Naive thymus-derived CD4-positive, alpha-beta T cell (primary cell): ENCODE measurements at regions of chr21 and their contacts with region 1.

Region 1: DNA sequence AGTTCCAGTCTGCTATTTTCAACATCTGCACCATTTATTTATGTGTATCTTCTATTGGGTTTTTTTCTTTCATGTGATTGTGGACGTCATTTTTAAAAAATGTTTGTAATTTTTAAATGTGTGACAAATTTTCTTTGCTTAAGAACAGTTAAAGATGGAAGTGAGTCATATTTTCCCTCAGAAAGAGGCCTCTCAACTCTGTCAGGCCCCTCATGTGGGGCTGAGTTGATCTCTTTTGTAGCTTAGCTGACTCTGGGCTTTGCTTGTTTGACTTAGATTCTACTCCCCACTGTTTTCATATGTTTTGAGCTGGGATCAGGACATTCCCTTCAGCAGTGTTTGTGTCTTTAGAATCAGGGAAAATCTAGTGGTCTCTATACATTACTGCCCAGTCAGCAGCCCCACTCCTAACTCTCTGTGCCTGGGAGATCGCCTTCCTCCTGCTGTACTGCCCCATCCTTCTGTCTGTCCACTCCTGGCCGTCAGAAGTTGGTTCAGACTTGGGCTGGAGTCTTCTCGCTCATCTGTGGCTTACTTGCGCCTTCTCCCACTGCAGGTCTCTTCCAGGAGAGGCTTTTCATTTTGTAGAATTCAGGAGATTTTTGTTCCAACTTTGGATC is 137.4 kb downstream of the DYRK1A start:
- DNase-seq: no peak
- ATAC-seq: no peak
- H3K4me3 ChIP-seq: no peak overlapping the region
- H3K4me3 Mint-ChIP-seq: no peak overlapping the region
- H3K27ac ChIP-seq: no peak overlapping the region
- H3K27ac Mint-ChIP-seq: peak overlapping the region; percentile 28 to 88 (median 70)
- H3K4me1 ChIP-seq: no peaks in the 10 kb centered on the region
- H3K4me1 Mint-ChIP-seq: peaks cover 6 to 42% (median 31%) of the 10 kb centered on the region in 7 donors
- H3K27me3 ChIP-seq: no peaks in the 10 kb centered on the region
- H3K27me3 Mint-ChIP-seq: no peaks in the 10 kb centered on the region

Region 2: DNA sequence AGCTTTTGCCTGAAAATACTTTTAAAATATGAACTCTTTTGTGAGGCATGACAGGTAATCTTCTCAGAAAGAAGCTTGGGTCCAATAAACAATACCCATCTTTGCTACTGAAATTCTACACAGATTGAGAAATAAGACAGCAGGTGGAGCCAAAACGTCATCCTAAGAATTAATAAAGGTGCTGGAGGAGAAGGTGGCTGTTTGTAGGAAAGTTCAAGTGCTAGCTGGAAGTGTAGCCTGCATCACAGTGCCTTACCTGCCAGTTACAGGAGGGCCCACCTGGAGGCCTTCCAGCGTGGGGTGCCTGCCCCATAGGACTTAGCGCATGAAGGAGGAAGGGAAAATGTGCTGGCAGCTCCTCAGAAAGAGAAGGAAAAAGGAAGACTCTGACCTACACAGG is 337.2 kb before region 1 on chr21:
- CTCF ChIA-PET with region 1: no interaction called
- POLR2A ChIA-PET with region 1: no interaction called
- intact Hi-C with region 1: loop called in 1 of 2 experiments (anchors 10 kb)
- DNase-seq: peak in 3 of 9 donors; percentile 2 to 8 (median 5)
- ATAC-seq: no peak
- H3K4me3 ChIP-seq: no peak overlapping the region
- H3K4me3 Mint-ChIP-seq: no peak overlapping the region
- H3K27ac ChIP-seq: no peak overlapping the region
- H3K27ac Mint-ChIP-seq: peak overlapping the region in 2 of 9 donors; percentile 67 to 88
- H3K4me1 ChIP-seq: no peaks in the 10 kb centered on the region
- H3K4me1 Mint-ChIP-seq: peaks cover 0 to 12% (median 3%) of the 10 kb centered on the region in 7 donors
- H3K27me3 ChIP-seq: no peaks in the 10 kb centered on the region
- H3K27me3 Mint-ChIP-seq: no peaks in the 10 kb centered on the region

Region 3: GRCh38 chr21:37534431-37534830 is 30.5 kb after region 1 on chr21:
- CTCF ChIA-PET with region 1: no interaction called
- POLR2A ChIA-PET with region 1: no interaction called
- intact Hi-C with region 1: loop called in 1 of 2 experiments (anchors 2 kb)
- DNase-seq: no peak
- ATAC-seq: no peak
- H3K4me3 ChIP-seq: no peak overlapping the region
- H3K4me3 Mint-ChIP-seq: no peak overlapping the region
- H3K27ac ChIP-seq: no peak overlapping the region
- H3K27ac Mint-ChIP-seq: no peak overlapping the region
- H3K4me1 ChIP-seq: no peaks in the 10 kb centered on the region
- H3K4me1 Mint-ChIP-seq: peaks cover 0 to 1% (median 0%) of the 10 kb centered on the region in 7 donors
- H3K27me3 ChIP-seq: no peaks in the 10 kb centered on the region
- H3K27me3 Mint-ChIP-seq: peaks cover 34 to 64% (median 59%) of the 10 kb centered on the region in 5 donors